HCT116 (cell line): ENCODE measurements at regions of chr2 and their contacts with region 1.

Region 1: GRCh38 chr2:53949457-53949856 is 21.3 kb downstream of the PSME4 start:
- DNase-seq: no peak
- ATAC-seq: no peak
- H3K4me3 ChIP-seq: no peak overlapping the region
- H3K27ac ChIP-seq: no peak overlapping the region
- H3K4me1 ChIP-seq: no peaks in the 10 kb centered on the region
- H3K27me3 ChIP-seq: no peaks in the 10 kb centered on the region
- CTCF ChIP-seq: no peak
- POLR2A ChIP-seq: no peak
- RAD21 ChIP-seq: no peak

Region 2: DNA sequence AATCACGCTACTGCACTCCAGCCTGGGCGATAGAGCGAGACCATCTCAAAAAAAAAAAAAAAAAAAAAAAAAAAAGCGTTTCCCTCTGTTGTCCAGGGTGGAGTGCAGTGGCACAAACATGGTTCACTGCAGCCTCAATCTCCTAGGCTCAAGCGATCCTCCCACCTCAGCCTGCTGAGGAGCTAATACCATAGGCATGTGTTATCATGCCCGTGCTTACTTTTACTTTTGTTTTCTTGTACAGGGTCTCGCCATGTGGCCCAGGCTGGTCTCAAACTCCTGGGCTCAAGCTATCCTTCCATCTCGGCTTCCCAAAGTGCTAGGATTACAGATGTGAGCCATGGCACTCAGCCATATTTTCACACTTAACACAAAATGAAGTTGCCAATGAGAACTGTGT is 16.1 kb before region 1 on chr2:
- CTCF ChIA-PET with region 1: no interaction called
- POLR2A ChIA-PET with region 1: no interaction called
- RAD21 ChIA-PET with region 1: no interaction called
- intact Hi-C with region 1: loop called (anchors 2 kb)
- DNase-seq: no peak
- ATAC-seq: no peak
- H3K4me3 ChIP-seq: no peak overlapping the region
- H3K27ac ChIP-seq: no peak overlapping the region
- H3K4me1 ChIP-seq: no peaks in the 10 kb centered on the region
- H3K27me3 ChIP-seq: no peaks in the 10 kb centered on the region
- CTCF ChIP-seq: no peak
- POLR2A ChIP-seq: no peak
- RAD21 ChIP-seq: no peak